Left ventricle myocardium superior (tissue), 1 donor: ENCODE measurements at regions of chr15 and their contacts with region 1.

Region 1: GRCh38 chr15:45402162-45402954 is 24.0 kb upstream of the GATM start:
- DNase-seq: peak; percentile 95
- ATAC-seq: peak; percentile 99

Region 2: DNA sequence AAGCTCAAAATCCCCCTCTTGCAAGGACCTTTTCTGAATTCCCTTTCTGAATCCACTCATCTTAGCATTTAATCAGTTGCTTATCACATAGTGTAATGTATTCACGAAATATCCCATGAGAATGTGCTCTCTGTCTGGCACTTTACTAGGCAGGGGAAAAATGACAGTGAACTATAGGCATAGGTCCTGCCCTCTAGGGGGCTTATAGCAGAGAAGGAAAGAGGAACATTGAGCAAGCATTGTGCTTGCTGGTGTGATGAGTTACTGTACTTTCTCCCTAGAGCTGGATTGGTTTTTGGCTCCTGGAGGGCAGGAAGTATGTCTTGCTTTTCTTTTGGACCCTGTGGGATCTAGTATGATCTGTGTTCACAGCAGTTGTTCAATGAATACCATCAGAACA is 314.8 kb before region 1 on chr15:
- intact Hi-C with region 1: no loop called
- DNase-seq: no peak
- ATAC-seq: no peak

Region 3: DNA sequence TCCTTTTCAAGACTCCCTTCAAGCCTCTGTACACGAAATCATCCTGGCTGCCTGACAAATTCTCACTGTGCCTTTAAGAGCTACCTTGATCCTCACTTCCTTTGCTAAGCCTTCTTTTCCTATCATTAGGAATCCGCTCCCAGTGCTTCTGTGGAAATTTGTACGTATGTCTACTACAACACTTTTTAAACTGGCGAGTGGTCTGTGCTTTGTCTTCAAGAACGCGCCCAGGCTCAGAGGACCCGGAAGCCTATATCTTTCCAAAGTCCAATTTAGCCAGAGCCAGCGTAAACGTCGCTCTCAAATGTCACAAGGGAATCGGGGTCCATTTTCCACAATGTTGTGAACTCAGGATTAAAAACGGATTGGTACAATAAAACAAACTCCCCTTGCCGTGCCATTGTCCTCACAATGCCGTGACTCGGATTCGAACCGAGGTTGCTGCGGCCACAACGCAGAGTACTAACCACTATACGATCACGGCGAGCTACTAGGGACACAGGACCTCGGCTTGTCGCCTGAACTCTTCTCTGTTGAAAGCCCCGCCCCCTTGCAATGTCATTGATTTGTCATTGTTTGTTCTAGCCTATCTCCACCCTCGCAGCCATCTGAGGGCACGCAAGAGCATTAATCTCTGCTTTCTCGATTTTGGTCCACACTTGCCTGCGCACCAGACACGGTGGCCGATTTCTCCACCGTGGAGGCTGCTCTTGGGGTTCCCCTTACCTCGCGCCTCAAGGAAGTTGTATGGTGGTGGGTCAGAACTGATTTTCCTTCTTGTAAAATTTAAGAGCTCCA is 202.2 kb before region 1 on chr15:
- intact Hi-C with region 1: loop called (anchors 5 kb)
- DNase-seq: peak; percentile 92
- ATAC-seq: peak; percentile 80

Region 4: GRCh38 chr15:45307230-45307924 is 95.0 kb before region 1 on chr15:
- intact Hi-C with region 1: loop called (anchors 5 kb)
- DNase-seq: no peak
- ATAC-seq: peak; percentile 59